Ascending aorta (tissue), 2 donors: ENCODE measurements at regions of chr2 and their contacts with region 1.

Region 1: DNA sequence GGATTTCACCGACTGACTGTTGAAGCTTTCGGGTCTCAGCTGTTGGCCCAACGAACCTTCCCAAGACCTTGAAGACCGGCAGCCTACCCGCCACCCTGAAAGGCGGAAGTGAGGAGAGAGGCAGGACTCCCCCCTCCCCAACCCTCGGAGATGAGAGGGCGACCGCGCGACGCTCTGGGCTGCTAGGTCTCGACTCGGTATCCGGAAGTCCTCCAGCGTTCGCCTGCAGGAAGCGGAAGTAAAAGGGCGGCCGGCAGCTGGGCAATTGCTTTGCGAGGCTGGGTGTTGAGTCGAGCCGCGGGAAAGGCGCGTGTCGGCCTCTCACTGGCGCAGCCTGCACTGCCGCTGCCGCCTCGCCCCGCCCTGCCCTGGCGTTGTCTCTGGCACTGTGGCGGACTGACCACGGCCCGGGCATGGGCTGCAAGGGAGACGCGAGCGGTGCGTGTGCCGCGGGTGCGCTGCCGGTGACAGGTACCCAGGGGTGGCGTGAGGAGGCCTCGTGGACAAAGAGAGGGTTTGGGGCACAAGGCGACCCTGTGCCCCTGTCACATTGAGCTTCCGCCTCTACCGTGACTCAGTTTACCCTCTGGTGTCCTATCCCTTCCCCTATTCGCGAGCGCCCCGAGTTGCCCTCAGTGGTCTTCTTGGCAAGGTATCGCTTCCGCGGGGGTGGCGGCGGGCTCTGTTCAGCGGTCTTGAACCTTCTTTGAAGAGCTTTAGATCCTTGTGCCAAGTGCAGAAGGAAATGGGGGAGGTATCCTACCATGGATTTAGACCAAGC is at the start of gene UGGT1:
- DNase-seq: peak; percentile 72 to 96
- H3K4me3 ChIP-seq: peak within 1 kb of the TSS; percentile 83 to 89
- H3K27ac ChIP-seq: peak within 1 kb of the TSS; percentile 74 to 75
- H3K4me1 ChIP-seq: peaks cover 0 to 4% of the 10 kb centered on the region in 2 donors
- H3K27me3 ChIP-seq: no peaks in the 10 kb centered on the region
- CTCF ChIP-seq: no peak
- total RNA-seq, gene UGGT1: 42.0 TPM

Region 2: DNA sequence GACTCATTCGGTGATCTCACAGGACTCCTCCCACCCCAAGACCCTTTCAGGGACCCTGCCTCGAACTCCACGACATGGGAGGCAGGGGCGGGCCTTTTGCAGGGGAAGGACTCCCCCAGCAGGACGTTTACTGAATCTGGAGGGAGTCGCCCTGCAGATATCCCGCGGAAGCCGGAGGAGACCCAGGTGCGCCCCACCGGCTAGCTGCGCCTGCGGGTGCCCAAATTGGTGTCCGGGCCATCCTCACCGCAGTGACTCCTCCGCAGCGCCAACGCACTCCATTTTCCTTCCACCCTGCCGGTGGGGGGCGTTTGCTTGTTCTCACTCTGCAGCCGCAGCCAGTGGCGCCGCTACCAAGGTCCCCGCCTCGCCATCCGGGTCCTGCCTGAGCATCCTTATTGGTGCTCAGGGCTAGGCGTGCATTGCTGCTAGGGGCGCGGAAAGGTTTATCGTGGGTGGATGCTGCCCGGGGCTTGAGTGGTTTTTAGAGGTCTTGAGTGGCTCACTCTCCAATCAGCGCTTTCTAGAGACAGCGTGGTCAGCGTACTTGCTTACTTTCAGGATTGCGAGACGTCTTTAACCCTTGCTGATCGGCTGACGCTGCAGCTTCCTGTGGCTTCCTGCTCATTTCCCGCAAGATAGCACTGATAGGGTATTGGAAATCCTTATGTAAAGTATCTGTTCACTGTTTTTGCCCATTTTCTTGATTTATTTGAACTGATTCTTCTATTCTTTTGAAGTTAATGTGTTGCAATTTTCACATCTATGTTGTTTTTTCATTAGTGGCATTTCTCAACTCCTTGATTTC is 1065.6 kb before region 1 on chr2:
- intact Hi-C with region 1: loop called (anchors 5 kb)
- DNase-seq: peak in 1 of 2 donors; percentile 92
- H3K4me3 ChIP-seq: peak overlapping the region; percentile 54 to 70
- H3K27ac ChIP-seq: peak overlapping the region; percentile 21 to 56
- H3K4me1 ChIP-seq: peaks cover 0 to 6% of the 10 kb centered on the region in 2 donors
- H3K27me3 ChIP-seq: peaks cover 4% of the 10 kb centered on the region
- CTCF ChIP-seq: peak in 1 of 3 experiments; percentile 22

Region 3: DNA sequence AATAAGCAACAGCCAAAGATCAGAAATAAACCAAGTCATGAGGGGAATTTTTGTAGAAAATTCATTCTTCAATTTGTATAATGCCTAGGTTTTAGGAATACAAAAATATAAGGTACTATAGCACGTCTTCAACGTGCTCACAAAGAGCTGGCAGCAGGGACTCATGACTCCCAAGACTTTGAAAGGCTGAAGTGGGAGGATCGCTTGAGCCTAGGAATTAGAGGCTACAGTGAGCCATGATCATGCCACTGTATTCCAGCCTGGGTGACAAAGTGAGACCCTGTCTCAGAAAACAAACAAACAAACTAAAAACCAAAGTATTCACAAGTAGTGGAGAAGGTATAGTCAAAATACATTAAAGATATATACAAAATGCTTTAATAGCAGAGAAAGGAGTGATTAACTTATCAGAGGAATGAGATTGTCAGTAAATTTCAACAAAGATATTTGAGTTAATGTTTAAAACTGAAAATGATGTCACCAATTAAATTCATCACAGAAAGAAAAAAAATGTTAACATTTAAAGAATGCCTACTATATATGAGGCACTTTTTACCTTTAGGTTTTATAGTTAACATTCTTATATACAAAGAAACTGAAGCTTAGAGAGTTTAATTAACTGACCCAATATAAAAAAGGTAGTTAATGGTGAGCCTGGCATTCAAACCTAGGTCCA is 283.3 kb before region 1 on chr2:
- intact Hi-C with region 1: no loop called
- DNase-seq: no peak
- H3K4me3 ChIP-seq: no peak overlapping the region
- H3K27ac ChIP-seq: no peak overlapping the region
- H3K4me1 ChIP-seq: peaks cover 0 to 30% of the 10 kb centered on the region in 2 donors
- H3K27me3 ChIP-seq: no peaks in the 10 kb centered on the region
- CTCF ChIP-seq: no peak

Region 4: GRCh38 chr2:127857265-127857808 is 233.8 kb before region 1 on chr2:
- intact Hi-C with region 1: loop called (anchors 5 kb)
- DNase-seq: no peak
- H3K4me3 ChIP-seq: peak overlapping the region; percentile 78 to 96
- H3K27ac ChIP-seq: peak overlapping the region; percentile 67 to 81
- H3K4me1 ChIP-seq: peaks cover 0 to 9% of the 10 kb centered on the region in 2 donors
- H3K27me3 ChIP-seq: no peaks in the 10 kb centered on the region
- CTCF ChIP-seq: no peak

Region 5: GRCh38 chr2:127884436-127885345 is 206.4 kb before region 1 on chr2:
- intact Hi-C with region 1: loop called (anchors 10 kb)
- DNase-seq: no peak
- H3K4me3 ChIP-seq: peak overlapping the region; percentile 67 to 69
- H3K27ac ChIP-seq: peak overlapping the region; percentile 85 to 88
- H3K4me1 ChIP-seq: peaks cover 9 to 33% of the 10 kb centered on the region in 2 donors
- H3K27me3 ChIP-seq: no peaks in the 10 kb centered on the region
- CTCF ChIP-seq: no peak